Activated naive CD4-positive, alpha-beta T cell treated with anti-CD3 and anti-CD28 coated beads for 36 hours (primary cell): ENCODE measurements at regions of chr10 and their contacts with region 1.

Region 1: GRCh38 chr10:119650692-119651513 is at the start of gene BAG3:
- DNase-seq: peak; percentile 82
- H3K4me3 Mint-ChIP-seq: peak within 1 kb of the TSS; percentile 97
- H3K27ac Mint-ChIP-seq: peak within 1 kb of the TSS; percentile 95
- H3K4me1 Mint-ChIP-seq: peaks cover 38% of the 10 kb centered on the region
- H3K27me3 Mint-ChIP-seq: no peaks in the 10 kb centered on the region
- total RNA-seq, gene BAG3: 20.9 to 24.3 TPM

Region 2: DNA sequence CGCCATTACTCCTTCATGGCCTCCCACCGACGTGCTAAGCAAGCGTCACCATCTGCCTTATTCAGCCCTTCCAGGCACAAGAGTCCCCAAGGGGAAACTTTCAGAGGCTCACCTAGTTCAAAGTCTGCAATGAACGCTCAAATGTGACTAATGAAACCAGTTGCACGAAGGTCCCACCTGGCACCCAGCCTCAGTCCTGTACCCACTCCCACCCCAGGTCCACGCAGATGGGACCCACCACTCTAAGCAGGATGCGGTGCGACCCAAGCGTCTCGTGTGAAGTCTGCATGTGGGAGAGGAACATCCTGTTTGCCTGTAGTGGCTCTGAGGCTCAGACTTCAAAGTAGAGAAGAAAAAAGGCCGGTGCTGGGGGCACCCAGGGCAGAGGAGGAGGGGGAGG is 148.7 kb before region 1 on chr10:
- CTCF ChIA-PET with region 1: no interaction called
- intact Hi-C with region 1: loop called (anchors 1 kb)
- DNase-seq: peak; percentile 93
- H3K4me3 Mint-ChIP-seq: peak overlapping the region; percentile 47
- H3K27ac Mint-ChIP-seq: peak overlapping the region; percentile 99
- H3K4me1 Mint-ChIP-seq: peaks cover 98% of the 10 kb centered on the region
- H3K27me3 Mint-ChIP-seq: no peaks in the 10 kb centered on the region

Region 3: GRCh38 chr10:119517235-119518141 is 133.4 kb before region 1 on chr10:
- CTCF ChIA-PET with region 1: no interaction called
- intact Hi-C with region 1: loop called (anchors 2 kb)
- DNase-seq: peak; percentile 83
- H3K4me3 Mint-ChIP-seq: peak overlapping the region; percentile 43
- H3K27ac Mint-ChIP-seq: peak overlapping the region; percentile 90
- H3K4me1 Mint-ChIP-seq: peaks cover 70% of the 10 kb centered on the region
- H3K27me3 Mint-ChIP-seq: no peaks in the 10 kb centered on the region

Region 4: GRCh38 chr10:119608316-119609155 is 42.4 kb before region 1 on chr10:
- CTCF ChIA-PET with region 1: interaction called, 7 read pairs
- intact Hi-C with region 1: loop called (anchors 1 kb)
- DNase-seq: peak; percentile 68
- H3K4me3 Mint-ChIP-seq: peak overlapping the region; percentile 33
- H3K27ac Mint-ChIP-seq: no peak overlapping the region
- H3K4me1 Mint-ChIP-seq: peaks cover 9% of the 10 kb centered on the region
- H3K27me3 Mint-ChIP-seq: no peaks in the 10 kb centered on the region

Region 5: GRCh38 chr10:119634219-119634544 is 16.7 kb before region 1 on chr10:
- CTCF ChIA-PET with region 1: no interaction called
- intact Hi-C with region 1: no loop called
- DNase-seq: no peak
- H3K4me3 Mint-ChIP-seq: no peak overlapping the region
- H3K27ac Mint-ChIP-seq: no peak overlapping the region
- H3K4me1 Mint-ChIP-seq: no peaks in the 10 kb centered on the region
- H3K27me3 Mint-ChIP-seq: no peaks in the 10 kb centered on the region

Region 6: DNA sequence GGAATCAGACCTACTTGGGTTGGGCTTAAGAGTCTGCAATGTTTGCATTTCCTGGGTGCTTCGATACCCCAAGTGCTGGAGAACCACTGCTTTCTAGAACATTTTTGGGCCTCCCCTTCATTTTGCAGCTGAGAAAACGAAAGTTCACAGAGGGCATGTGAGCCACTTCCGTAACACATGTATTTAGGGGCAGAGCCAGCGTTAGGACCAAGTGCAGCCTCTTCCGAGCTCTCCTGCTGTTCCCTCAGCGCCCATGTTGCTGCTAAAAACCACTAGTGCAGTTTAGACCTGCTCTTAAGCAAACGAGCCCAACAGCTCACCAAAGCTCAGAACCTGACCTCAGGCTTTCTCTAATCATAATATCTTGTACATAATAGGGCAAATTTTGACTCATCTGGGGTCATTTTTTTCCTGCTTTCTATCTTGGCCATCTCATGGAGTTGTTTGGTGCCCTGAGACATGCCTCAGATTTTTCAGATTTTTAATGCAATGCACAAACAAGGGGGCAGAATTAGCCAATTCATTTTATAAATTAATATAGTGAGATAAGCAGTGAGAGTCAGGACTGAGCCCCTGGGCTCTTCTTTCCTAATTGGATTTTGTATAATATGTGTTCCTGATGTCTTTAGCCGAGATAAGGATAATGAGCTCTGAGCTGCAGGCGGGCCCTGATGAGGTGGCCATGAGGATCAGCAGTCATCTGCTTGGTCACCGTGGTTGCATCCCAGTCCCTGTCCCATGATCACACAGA is 13.1 kb after region 1 on chr10:
- CTCF ChIA-PET with region 1: interaction called, 10 read pairs
- intact Hi-C with region 1: loop called (anchors 1 kb)
- DNase-seq: peak; percentile 53
- H3K4me3 Mint-ChIP-seq: peak overlapping the region; percentile 57
- H3K27ac Mint-ChIP-seq: peak overlapping the region; percentile 85
- H3K4me1 Mint-ChIP-seq: peaks cover 54% of the 10 kb centered on the region
- H3K27me3 Mint-ChIP-seq: no peaks in the 10 kb centered on the region

Region 7: GRCh38 chr10:119725828-119726675 is 75.1 kb after region 1 on chr10 and contains the start of gene INPP5F:
- CTCF ChIA-PET with region 1: no interaction called
- intact Hi-C with region 1: loop called (anchors 1 kb)
- DNase-seq: peak; percentile 100
- H3K4me3 Mint-ChIP-seq: peak within 1 kb of the TSS; percentile 88
- H3K27ac Mint-ChIP-seq: peak within 1 kb of the TSS; percentile 78
- H3K4me1 Mint-ChIP-seq: peaks cover 41% of the 10 kb centered on the region
- H3K27me3 Mint-ChIP-seq: no peaks in the 10 kb centered on the region
- total RNA-seq, gene INPP5F: 10.5 to 10.9 TPM

Region 8: GRCh38 chr10:119872860-119873681 is 222.2 kb after region 1 on chr10:
- CTCF ChIA-PET with region 1: no interaction called
- intact Hi-C with region 1: loop called (anchors 1 kb)
- DNase-seq: peak; percentile 84
- H3K4me3 Mint-ChIP-seq: peak overlapping the region; percentile 83
- H3K27ac Mint-ChIP-seq: peak overlapping the region; percentile 84
- H3K4me1 Mint-ChIP-seq: peaks cover 38% of the 10 kb centered on the region
- H3K27me3 Mint-ChIP-seq: no peaks in the 10 kb centered on the region

Region 9: DNA sequence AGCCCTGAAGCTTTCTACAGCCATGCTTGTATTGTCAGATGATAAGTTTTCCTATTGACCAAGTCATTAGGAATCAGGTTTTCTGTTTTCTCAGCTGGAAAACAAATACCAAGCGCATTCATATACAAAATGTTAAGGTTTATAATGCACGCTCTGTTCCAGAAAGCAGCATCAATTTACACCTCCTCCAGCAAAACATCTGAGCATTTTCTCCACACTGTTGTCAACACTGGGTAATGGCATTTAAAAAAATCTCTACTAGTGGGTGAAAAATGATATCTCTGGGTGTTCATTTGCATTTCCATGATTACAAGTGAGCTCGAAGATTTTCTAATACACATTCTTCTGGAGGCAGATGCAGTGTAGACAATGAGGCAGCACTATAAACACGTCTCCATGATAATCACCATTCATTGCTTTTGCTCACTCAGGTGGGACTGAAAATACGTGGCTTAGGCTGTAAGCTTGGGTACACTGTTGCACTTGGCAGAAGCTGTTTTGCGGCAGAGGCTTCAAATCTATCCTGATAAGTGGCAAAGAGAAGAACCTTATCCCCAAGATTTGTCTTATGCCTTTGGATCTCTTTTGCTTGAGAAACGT is 691.3 kb after region 1 on chr10:
- CTCF ChIA-PET with region 1: no interaction called
- intact Hi-C with region 1: no loop called
- DNase-seq: no peak
- H3K4me3 Mint-ChIP-seq: no peak overlapping the region
- H3K27ac Mint-ChIP-seq: no peak overlapping the region
- H3K4me1 Mint-ChIP-seq: no peaks in the 10 kb centered on the region
- H3K27me3 Mint-ChIP-seq: peaks cover 14% of the 10 kb centered on the region